Adrenal gland (tissue), 19 donors: ENCODE measurements at regions of chr9 and their contacts with region 1.

Region 1: GRCh38 chr9:35604578-35605350 is at the start of gene TESK1:
- DNase-seq: peak; percentile 75 to 87 (median 84)
- H3K4me3 ChIP-seq: peak within 1 kb of the TSS; percentile 28 to 100 (median 65)
- H3K27ac ChIP-seq: peak within 1 kb of the TSS; percentile 51 to 94 (median 93)
- H3K4me1 ChIP-seq: peaks cover 13 to 23% of the 10 kb centered on the region in 2 donors
- H3K27me3 ChIP-seq: no peaks in the 10 kb centered on the region
- CTCF ChIP-seq: no peak
- POLR2A ChIP-seq: no peak
- total RNA-seq, gene TESK1: 25.9 to 189 (median 56.5) TPM

Region 2: GRCh38 chr9:35646533-35647265 is 41.9 kb after region 1 on chr9:
- intact Hi-C with region 1: loop called in 1 of 2 experiments (anchors 5 kb)
- DNase-seq: peak; percentile 89 to 96 (median 95)
- H3K4me3 ChIP-seq: peak overlapping the region; percentile 27 to 69 (median 58)
- H3K27ac ChIP-seq: peak overlapping the region; percentile 43 to 92 (median 79)
- H3K4me1 ChIP-seq: peaks cover 3 to 18% of the 10 kb centered on the region in 2 donors
- H3K27me3 ChIP-seq: no peaks in the 10 kb centered on the region
- CTCF ChIP-seq: peak; percentile 90 to 99 (median 93)
- POLR2A ChIP-seq: peak; percentile 87